Right ventricle myocardium inferior (tissue), 1 donor: ENCODE measurements at regions of chr16 and their contacts with region 1.

Region 1: GRCh38 chr16:75198135-75198600 is 8.8 kb downstream of the CTRB2 start:
- DNase-seq: no peak
- ATAC-seq: peak; percentile 17

Region 2: GRCh38 chr16:75385507-75386152 is 187.5 kb after region 1 on chr16:
- intact Hi-C with region 1: loop called (anchors 1 kb)
- DNase-seq: no peak
- ATAC-seq: no peak

Region 3: GRCh38 chr16:75402821-75403475 is 204.8 kb after region 1 on chr16:
- intact Hi-C with region 1: loop called (anchors 1 kb)
- DNase-seq: no peak
- ATAC-seq: no peak

Region 4: DNA sequence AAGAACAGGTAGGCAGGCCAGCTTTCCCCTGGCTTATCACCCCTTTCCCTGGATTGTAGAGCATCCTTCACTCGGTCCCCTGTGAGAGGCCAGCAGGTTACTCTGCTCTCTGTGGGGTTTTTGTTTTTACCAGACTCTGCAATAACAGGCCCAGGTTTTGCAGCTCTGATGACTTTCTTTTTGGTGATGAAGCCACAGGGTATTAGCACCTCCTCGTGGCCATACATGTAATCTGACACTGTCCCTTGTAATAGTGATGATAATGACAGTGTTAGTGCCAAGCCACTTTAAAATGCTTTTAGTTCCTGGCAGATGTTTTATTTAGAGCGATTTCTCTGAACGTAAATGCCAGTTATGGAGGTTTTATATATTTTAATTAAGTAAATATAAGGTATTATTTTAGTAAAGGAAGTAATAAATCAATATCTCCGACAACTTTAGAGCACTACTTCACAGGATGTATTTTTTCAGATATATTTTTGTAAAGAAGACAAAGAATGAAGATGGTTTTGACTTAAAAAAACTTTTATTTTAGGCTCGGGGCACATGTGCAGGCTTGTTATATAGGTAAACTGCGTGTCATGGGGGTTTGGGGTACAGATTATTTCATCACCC is 566.1 kb after region 1 on chr16:
- intact Hi-C with region 1: loop called (anchors 5 kb)
- DNase-seq: no peak
- ATAC-seq: peak; percentile 84